ENCODE measurements at regions of chr1 and their contacts with region 1.

Region 1: DNA sequence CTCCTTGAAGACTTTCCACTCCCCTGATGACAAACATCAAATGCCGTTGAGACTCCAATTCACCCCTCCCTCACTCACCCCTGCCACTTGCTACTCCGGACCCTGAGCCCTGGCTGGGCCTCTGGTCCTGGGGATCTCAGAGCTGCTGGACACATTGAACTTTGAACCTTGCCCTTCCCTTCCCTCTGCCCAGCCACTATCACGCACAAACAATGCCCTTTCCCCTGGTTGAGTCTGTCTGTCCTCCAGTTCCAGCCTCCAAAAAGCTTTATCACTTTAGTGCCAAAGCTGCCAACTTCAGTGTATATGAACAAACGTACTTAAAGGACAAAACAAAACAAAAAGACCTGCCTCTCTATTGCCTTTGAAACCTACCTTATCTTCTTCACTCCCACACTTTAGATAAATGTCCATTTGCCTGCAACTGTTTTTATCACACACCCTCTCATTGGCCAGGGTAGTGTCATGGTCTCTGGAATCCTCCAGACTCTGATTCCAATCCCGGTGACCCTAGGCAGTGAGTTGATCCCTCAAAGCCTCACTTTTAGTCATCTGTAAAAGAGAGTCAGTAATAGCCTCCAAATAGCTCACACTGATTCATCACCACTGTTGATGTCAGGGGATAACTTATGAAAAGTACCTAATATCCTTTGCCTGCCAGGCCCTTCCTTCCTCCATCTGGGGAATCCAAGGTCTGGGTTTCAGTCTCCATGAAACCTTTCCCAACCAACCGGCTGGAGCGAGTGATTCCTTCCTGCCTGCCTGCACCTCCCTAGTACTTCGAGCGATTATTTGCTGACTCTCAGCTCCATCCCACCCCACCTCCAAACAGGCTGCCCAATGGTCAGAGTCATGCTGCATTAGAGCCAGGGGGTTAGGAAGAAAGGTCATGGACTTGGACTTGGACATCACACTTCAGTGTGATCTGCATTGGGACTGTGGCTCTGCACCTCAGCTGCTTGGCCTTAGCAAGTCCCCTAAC is 15.9 kb upstream of the SPOCD1 start:
- DNase-seq: no peak
- H3K4me3 ChIP-seq: no peak overlapping the region
- H3K27ac ChIP-seq: no peak overlapping the region
- H3K4me1 ChIP-seq: no peaks in the 10 kb centered on the region
- H3K27me3 ChIP-seq: peaks cover 5% of the 10 kb centered on the region; the same call in 1 of the 2 replicates
- CTCF ChIP-seq: no peak

Region 2: DNA sequence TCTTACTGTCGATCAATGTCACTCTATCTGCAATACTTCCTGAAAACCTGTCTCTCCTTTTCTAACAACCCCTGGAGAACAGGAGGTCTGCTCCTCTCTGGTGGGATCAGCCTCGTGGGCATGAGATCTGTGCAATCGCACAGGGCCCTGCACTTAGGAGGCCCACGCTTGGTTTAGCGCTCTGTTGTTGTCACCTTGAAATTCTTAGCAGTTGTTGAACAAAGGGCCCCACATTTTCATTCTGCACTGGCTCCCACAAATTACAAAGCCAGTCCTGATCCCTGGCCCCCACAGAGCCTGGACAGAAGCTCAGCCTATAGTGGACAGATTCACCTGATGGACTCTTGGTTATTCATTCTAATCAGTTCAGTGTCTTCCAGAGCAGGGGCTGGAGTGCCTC is 34.5 kb before region 1 on chr1:
- CTCF ChIA-PET with region 1: no interaction called
- POLR2A ChIA-PET with region 1: no interaction called
- intact Hi-C with region 1: no loop called
- DNase-seq: no peak
- H3K4me3 ChIP-seq: peak overlapping the region; percentile 63
- H3K27ac ChIP-seq: peak overlapping the region; percentile 75; the same call in 1 of the 2 replicates
- H3K4me1 ChIP-seq: peaks cover 35% of the 10 kb centered on the region
- H3K27me3 ChIP-seq: no peaks in the 10 kb centered on the region
- CTCF ChIP-seq: no peak

Region 3: GRCh38 chr1:32142446-32143301 is 311.0 kb after region 1 on chr1:
- CTCF ChIA-PET with region 1: no interaction called
- POLR2A ChIA-PET with region 1: interaction called, 15 read pairs
- intact Hi-C with region 1: no loop called
- DNase-seq: peak; percentile 17 to 52
- H3K4me3 ChIP-seq: no peak overlapping the region
- H3K27ac ChIP-seq: no peak overlapping the region
- H3K4me1 ChIP-seq: peaks cover 26% of the 10 kb centered on the region
- H3K27me3 ChIP-seq: no peaks in the 10 kb centered on the region
- CTCF ChIP-seq: no peak

Measured in PC-9 (cell line).